ENCODE measurements at regions of chr15 and their contacts with region 1.

Region 1: DNA sequence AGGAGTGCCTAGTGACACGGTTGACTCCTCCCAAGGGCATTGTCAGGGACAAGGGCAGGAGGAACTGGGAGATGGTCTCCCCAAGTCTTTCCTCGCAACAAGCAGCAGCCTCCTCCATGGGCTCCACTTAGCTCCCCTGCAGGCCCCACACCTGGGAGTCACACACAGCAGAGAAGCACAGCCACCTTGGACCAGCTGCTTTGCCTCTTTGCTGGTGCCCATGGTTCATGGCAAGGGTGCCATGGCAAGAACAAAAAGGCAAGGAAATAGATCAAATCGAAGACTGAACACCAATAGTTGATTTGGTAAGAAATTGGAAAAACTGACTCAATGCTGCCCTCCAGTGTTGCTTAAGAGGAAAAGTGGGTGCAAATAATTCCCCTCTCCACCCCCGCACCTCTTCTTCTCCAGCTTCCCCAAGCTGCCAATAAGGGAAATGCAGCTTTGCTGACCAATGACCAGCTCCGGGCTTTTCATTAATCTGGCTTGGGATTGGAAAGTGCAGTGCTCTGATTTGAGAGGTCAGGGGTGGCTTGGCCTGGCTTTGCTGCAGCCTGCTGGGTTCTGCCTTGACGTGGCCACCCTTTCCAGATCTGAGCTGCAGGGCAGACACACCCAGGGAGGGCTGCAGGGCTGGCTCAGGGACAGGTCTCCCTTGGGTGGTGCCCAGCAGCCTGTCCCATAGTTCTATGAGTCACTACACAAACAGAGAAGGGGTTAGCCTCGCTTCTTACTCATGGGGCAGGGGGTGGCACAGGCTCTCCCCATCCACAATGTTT is 162.0 kb downstream of the KLF13 start:
- DNase-seq: peak; percentile 38
- H3K4me3 Mint-ChIP-seq: peak overlapping the region; percentile 10
- H3K27ac Mint-ChIP-seq: peak overlapping the region; percentile 79
- H3K4me1 Mint-ChIP-seq: peaks cover 61% of the 10 kb centered on the region
- H3K27me3 Mint-ChIP-seq: no peaks in the 10 kb centered on the region

Region 2: DNA sequence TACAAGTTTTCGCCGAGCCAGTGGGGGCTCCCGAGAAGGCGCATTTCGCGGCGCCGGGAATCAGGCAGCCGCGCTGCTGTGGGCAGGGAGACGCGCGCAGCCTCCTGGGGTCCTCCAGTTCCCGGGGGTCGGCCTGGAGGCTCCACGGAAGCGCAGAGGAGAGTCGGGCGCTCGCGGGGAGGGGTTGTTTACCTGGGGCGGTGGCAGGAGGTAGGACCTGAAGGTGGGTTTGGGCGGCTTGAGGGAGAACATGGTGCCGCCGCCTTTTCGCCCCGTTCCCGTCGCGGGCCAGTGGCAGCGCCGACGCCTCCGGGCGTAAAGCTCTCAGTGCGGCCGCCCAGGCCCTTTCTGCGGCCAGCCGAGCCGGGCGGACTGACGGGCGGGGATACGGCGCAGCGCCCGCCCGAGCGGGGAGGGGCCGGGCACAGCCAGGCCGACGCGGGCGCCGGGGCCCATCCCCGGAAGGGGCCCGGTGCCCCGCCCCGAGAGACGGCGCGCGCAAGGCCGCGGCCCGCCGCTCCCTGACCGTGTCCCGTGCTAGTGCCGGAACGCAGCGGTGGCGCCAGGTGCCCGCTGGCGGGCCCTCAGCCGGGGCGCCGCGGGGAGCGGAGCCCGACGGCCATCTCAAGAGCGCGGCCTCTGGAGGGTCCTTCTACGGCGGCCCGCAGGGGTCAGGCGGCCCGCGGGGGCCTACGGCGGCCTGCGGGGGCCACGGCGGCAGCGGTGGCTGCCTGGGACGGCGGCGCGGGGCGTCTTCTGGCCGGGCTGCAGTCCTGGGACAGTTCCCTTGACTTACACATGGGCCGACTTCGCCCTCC is 497.2 kb before region 1 on chr15 and contains the start of gene MTMR10:
- intact Hi-C with region 1: loop called (anchors 10 kb)
- DNase-seq: peak; percentile 75
- H3K4me3 Mint-ChIP-seq: peak within 1 kb of the TSS; percentile 90
- H3K27ac Mint-ChIP-seq: peak within 1 kb of the TSS; percentile 83
- H3K4me1 Mint-ChIP-seq: peaks cover 19% of the 10 kb centered on the region
- H3K27me3 Mint-ChIP-seq: peaks cover 10% of the 10 kb centered on the region
- total RNA-seq, gene MTMR10: 12.2 and 14.1 TPM in 2 replicates

Region 3: GRCh38 chr15:31265871-31266711 is 222.5 kb before region 1 on chr15:
- intact Hi-C with region 1: loop called (anchors 5 kb)
- DNase-seq: peak; percentile 78
- H3K4me3 Mint-ChIP-seq: peak overlapping the region; percentile 35
- H3K27ac Mint-ChIP-seq: peak overlapping the region; percentile 74
- H3K4me1 Mint-ChIP-seq: peaks cover 78% of the 10 kb centered on the region
- H3K27me3 Mint-ChIP-seq: no peaks in the 10 kb centered on the region

Region 4: DNA sequence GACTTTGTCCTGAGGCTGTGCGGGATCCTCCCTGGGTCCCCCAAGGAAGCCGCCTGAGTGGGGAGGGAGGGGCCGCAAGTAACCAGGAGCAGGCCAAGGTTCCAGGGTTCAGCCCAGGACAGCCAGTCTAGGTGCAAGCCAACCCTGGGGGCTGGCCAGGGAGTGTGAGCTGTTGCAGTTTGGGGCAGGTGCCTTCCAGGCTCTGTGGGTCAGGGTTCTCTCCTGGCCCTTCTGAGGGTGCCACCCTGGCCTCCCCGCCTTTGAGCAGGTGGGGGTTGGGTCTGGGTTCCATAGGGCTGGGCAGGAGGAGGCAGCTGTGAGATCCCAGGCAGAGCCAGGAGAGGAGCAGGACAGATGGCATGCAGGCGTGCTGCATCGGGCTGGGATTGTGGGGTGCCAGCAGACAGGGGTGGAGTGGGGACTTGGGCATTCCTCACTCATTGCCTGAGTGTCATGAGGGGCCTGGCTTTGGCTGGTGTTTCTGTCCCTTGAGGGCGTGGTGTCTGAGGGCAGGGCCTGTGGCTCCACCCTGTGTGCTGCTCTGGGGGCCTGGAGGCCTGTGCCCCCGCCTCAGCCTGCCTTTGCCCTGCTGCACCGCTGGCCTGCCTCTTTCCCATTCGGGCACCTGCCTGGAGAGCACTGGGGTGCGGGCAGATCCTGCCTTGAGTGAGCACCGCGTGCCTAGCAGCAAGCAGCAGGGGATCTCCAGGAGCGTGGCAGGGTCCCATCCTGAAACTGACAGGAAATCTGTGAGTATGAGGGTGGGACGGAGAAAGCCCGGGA is 143.6 kb before region 1 on chr15:
- intact Hi-C with region 1: loop called (anchors 5 kb)
- DNase-seq: no peak
- H3K4me3 Mint-ChIP-seq: peak overlapping the region; percentile 82
- H3K27ac Mint-ChIP-seq: peak overlapping the region; percentile 97
- H3K4me1 Mint-ChIP-seq: peaks cover 87% of the 10 kb centered on the region
- H3K27me3 Mint-ChIP-seq: no peaks in the 10 kb centered on the region

Region 5: DNA sequence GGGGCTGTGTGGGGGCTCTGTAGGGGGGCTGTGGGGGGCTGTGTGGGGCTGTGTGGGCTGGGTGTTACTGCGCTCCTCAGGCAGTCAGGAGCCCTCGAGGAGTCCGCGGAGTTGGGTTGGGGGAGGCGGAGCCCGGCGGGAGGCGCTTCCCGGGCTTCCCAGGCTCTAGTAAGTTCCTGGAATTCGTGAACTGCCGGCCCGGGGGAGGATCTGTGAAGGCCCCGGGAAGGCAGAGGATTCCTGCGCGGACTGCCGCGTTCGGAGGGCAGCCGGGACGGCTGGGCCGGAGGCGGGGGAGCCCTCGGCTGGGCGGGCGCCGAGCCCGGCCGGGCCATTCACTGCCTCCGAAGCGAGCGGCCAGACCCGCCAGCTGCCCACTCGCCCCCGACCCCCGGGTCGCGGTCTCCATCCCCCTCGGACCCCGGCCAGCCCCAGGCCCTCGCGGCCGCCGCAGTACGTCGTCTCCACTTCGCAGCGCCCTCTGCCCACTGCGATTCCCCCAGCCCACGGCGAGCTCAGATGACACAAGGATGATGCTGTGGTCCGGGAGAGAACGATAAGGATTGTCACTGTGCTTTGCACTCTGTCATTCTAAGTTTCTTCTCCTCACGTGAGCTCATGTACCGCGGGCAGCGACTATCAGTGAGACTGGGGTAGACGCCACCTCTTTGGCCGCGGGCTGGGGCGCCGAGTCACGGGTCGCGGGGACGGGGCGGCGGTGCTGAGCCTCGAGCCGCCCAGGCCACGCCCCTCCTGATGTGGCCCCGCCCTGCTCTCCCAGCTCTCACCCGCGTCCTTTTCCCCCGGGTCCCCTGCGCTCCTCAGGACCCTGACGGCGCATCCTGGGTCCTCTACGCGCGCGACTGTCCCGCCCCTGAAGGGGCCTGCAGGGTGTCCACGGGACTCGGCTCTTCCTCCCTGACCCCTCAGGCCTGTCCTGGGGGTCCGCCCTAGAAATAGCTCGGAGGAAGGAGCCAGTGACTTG is 96.6 kb before region 1 on chr15:
- intact Hi-C with region 1: loop called (anchors 2 kb)
- DNase-seq: peak; percentile 77
- H3K4me3 Mint-ChIP-seq: peak overlapping the region; percentile 87
- H3K27ac Mint-ChIP-seq: peak overlapping the region; percentile 82
- H3K4me1 Mint-ChIP-seq: peaks cover 43% of the 10 kb centered on the region
- H3K27me3 Mint-ChIP-seq: no peaks in the 10 kb centered on the region

Region 6: DNA sequence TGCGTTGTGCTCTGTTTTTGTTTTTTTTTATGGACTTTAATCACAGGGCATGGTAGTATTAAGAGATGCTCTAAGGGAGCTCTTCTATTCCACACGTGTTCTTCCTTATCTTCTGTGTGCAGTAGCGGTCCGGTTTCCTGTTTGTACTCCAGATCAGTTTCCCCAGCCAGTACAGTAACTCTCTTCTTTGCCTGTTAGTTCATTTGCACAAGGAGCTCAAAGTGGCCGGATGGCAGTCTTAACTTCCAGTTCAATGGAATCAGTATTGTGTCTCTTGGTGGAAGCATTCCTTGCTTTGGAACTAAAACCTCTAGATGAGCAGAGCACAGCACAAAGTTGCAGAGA is 40.0 kb before region 1 on chr15:
- intact Hi-C with region 1: no loop called
- DNase-seq: no peak
- H3K4me3 Mint-ChIP-seq: no peak overlapping the region
- H3K27ac Mint-ChIP-seq: no peak overlapping the region
- H3K4me1 Mint-ChIP-seq: peaks cover 22% of the 10 kb centered on the region
- H3K27me3 Mint-ChIP-seq: no peaks in the 10 kb centered on the region

Region 7: DNA sequence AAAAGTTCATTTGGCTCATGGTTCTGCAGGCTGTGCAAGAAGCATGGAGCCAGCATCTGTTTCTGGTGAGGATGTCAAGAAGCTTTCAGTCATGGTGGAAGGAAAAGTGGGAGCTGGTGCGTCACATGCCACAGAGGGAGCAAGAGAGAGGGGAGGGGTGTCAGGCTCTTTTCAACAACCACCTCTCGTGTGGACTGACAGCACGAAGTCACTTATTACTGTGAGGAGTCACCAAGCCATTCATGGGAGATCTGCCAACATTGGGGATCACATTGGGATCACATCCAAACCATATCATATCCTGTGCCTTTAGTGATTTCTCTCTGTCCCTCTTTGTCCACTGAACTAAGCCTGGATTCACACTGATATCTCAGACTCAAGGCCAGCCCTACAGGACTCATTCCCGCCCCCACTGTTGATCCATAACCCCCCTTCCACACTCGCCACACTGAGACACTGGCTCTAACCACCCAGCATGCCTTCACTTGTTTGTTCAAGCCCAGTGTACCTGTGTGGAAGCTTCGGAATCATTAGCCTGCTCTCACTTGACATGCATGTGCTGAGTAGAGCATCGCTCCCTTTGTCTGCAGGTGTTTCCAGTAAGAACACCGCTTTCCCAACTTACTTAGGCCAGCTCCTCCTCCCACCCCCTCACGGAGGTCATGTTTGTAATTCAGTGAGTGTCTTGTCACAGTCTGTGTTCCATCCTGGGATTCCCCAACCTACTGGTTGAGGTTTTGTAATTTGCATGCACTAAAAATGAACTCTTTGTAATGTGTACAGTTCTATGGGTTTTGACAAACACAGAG is 29.8 kb before region 1 on chr15:
- intact Hi-C with region 1: loop called (anchors 1 kb)
- DNase-seq: no peak
- H3K4me3 Mint-ChIP-seq: peak overlapping the region; percentile 48
- H3K27ac Mint-ChIP-seq: peak overlapping the region; percentile 80
- H3K4me1 Mint-ChIP-seq: peaks cover 26% of the 10 kb centered on the region
- H3K27me3 Mint-ChIP-seq: no peaks in the 10 kb centered on the region

Region 8: DNA sequence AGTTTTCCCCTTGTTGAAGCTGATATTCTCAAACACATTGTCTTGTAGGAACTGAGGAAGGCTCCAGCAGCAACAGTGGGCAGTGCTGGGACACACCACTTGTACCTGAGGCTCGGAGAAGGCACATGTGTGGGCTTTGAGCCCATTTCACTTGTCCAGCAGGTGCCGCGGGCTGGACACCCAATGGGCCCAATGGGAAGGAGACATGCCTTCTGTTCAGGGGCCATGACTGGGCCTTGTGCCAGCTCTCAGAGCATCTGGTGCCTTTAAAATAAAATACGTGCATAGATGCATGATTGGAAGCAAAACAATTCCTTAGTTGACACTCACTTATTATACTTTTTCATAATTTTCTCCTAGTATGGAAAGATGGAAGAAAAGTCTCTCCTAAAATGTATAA is 172.2 kb after region 1 on chr15:
- intact Hi-C with region 1: no loop called
- DNase-seq: no peak
- H3K4me3 Mint-ChIP-seq: no peak overlapping the region
- H3K27ac Mint-ChIP-seq: no peak overlapping the region
- H3K4me1 Mint-ChIP-seq: no peaks in the 10 kb centered on the region
- H3K27me3 Mint-ChIP-seq: peaks cover 2% of the 10 kb centered on the region

Region 9: GRCh38 chr15:31964586-31965307 is 476.1 kb after region 1 on chr15:
- intact Hi-C with region 1: no loop called
- DNase-seq: no peak
- H3K4me3 Mint-ChIP-seq: no peak overlapping the region
- H3K27ac Mint-ChIP-seq: no peak overlapping the region
- H3K4me1 Mint-ChIP-seq: no peaks in the 10 kb centered on the region
- H3K27me3 Mint-ChIP-seq: no peaks in the 10 kb centered on the region